ENCODE measurements at regions of chr9 and their contacts with region 1.

Region 1: GRCh38 chr9:99819856-99820684 is 1.6 kb upstream of the NR4A3 start:
- DNase-seq: peak; percentile 94 to 98 (median 96)
- H3K4me3 ChIP-seq: peak overlapping the region; percentile 96
- H3K27ac ChIP-seq: peak overlapping the region; percentile 98 to 99
- H3K4me1 ChIP-seq: peaks cover 4% of the 10 kb centered on the region
- H3K27me3 ChIP-seq: no peaks in the 10 kb centered on the region
- CTCF ChIP-seq: peak in 1 of 3 donors; percentile 22
- EP300 ChIP-seq: peak; percentile 95
- POLR2A ChIP-seq: peak; percentile 47

Region 2: DNA sequence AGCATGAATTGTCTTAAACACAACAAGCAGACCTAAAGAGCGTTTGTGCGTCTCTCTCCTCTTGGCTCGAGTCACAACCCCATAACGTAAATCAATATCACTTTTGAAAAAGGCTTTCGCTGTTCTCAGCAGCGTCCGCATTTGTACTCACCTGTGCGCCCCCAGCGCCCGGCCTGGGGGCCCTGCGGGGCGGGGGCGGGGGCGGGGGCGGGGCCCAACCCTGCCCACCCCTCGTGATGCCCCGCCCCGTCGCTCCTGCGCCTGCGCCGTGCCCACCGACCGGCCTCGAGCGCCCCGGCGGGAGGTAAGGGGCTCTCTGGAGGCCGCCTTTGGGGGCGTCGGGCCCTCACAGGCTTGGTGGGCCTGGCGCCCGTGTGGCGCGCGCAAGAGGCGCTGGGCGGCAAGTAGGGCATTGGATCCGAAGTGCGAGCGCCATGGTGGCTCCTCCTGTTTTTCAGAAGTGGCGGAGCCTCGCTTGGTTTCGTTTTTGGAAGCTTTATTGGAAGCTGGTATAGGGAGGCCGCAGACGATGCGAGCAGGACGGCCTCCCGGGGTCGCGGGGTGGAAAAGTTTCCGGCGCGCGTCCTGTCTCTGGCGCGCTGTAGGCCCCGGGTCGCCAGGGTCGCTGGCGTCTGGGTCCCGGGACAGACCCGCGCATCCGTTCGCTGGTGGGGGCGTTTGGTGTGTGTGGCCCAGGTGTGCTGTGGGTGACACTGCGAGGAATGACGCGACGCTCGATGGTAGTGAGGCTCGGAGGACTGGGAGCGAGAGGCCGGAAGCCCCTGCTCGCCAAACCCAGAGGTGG is 86.5 kb after region 1 on chr9 and contains the start of gene STX17:
- intact Hi-C with region 1: loop called in 2 of 4 experiments (anchors 5 to 10 kb)
- DNase-seq: peak; percentile 81 to 90 (median 88)
- H3K4me3 ChIP-seq: peak within 1 kb of the TSS; percentile 90
- H3K27ac ChIP-seq: peak within 1 kb of the TSS; percentile 92 to 94
- H3K4me1 ChIP-seq: peaks cover 1% of the 10 kb centered on the region
- H3K27me3 ChIP-seq: no peaks in the 10 kb centered on the region
- CTCF ChIP-seq: peak in 1 of 3 donors; percentile 27
- EP300 ChIP-seq: no peak
- POLR2A ChIP-seq: peak; percentile 87
- total RNA-seq, gene STX17: 27.9 to 43.1 (median 33.9) TPM

Region 3: DNA sequence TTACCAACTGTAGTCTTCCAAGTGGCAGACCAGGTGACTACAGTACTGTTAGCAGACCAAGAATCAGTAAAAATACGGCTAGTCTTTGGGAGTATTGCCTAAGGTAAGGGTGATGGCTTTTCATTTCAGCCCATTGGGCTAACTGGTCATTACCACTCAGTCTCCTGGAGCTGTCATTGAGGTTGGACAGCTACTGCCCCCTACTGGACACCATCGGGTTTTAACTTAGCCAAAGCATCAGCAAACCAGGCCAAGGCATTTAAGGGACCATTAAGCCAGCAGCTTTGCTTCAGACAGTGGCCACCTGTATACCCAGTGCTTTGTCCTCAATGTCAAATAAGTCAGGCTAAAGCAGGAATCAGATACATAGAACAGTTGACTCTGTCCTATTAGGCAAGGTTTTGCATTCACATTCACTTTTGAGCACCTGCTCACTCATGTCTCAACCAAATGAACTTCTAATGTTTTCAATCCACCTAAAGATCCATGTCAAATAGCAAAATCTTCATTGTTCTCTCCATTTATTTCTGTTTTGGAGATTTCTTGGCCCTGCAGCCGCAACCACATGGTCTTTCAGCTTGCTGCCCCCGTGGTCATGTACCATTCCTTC is 396.2 kb after region 1 on chr9:
- intact Hi-C with region 1: loop called in 1 of 4 experiments (anchors 10 kb)
- DNase-seq: peak in 1 of 5 donors; percentile 29
- H3K4me3 ChIP-seq: no peak overlapping the region
- H3K27ac ChIP-seq: no peak overlapping the region
- H3K4me1 ChIP-seq: no peaks in the 10 kb centered on the region
- H3K27me3 ChIP-seq: no peaks in the 10 kb centered on the region
- CTCF ChIP-seq: no peak
- EP300 ChIP-seq: no peak
- POLR2A ChIP-seq: no peak

Region 4: DNA sequence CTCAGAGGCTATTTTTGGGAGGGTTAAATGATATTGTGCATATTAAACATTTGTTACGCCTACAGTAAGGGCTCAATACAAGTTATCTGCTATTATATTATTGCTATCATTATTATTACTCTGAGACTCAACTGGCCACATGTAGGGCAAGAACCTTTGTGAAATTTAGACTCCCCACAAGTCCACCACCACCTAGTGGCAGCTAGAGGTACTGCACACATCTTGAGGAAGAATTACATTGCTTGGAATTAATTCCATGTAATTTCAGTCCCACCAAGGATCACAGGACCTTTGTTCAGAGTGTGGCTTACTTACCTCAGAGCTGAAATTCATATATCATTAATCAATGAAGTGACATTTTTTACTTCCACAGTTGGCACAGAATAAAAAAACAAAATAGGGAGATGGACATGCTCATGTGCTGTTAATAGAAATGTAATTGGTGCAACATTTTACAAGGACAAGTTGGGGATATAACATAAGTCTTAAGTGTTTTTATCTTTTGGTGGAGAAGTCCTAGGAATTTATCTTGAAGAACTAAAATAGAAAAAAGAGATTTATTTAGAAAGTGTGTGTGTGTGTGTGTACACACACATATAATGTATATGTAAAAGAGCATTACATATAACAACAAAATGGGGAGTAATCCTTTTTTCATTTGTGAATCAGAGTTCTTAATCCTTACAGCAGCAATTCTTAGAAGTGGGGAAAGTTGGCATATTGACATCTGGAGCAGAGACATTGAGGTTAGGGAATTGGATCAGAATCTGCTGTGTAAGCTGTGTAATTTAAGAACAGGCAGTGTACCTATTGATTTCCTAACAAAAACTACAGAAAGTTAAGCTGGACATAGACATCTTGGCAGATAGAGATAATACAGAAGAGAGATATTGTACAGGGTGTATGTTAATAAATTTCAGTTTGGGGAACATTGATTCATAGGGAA is 618.1 kb after region 1 on chr9:
- intact Hi-C with region 1: loop called in 1 of 4 experiments (anchors 10 kb)
- DNase-seq: peak; percentile 44 to 82 (median 54)
- H3K4me3 ChIP-seq: no peak overlapping the region
- H3K27ac ChIP-seq: no peak overlapping the region
- H3K4me1 ChIP-seq: peaks cover 2% of the 10 kb centered on the region
- H3K27me3 ChIP-seq: no peaks in the 10 kb centered on the region
- CTCF ChIP-seq: peak; percentile 71 to 92 (median 73)
- EP300 ChIP-seq: no peak
- POLR2A ChIP-seq: no peak